ENCODE measurements at regions of chr3 and their contacts with region 1.

Region 1: GRCh38 chr3:43162230-43163084 is 56.6 kb upstream of the POMGNT2 start:
- DNase-seq: peak; percentile 57
- ATAC-seq: peak; percentile 84
- H3K4me3 Mint-ChIP-seq: peak overlapping the region; percentile 61
- H3K27ac Mint-ChIP-seq: peak overlapping the region; percentile 87
- H3K4me1 Mint-ChIP-seq: peaks cover 20% of the 10 kb centered on the region
- H3K27me3 Mint-ChIP-seq: no peaks in the 10 kb centered on the region

Region 2: GRCh38 chr3:42451546-42452230 is 710.8 kb before region 1 on chr3:
- CTCF ChIA-PET with region 1: no interaction called
- POLR2A ChIA-PET with region 1: no interaction called
- intact Hi-C with region 1: no loop called
- DNase-seq: no peak
- ATAC-seq: no peak
- H3K4me3 Mint-ChIP-seq: no peak overlapping the region
- H3K27ac Mint-ChIP-seq: no peak overlapping the region
- H3K4me1 Mint-ChIP-seq: no peaks in the 10 kb centered on the region
- H3K27me3 Mint-ChIP-seq: no peaks in the 10 kb centered on the region

Region 3: GRCh38 chr3:42961633-42962032 is 200.8 kb before region 1 on chr3:
- CTCF ChIA-PET with region 1: interaction called, 8 read pairs
- POLR2A ChIA-PET with region 1: no interaction called
- intact Hi-C with region 1: loop called in 1 of 2 experiments (anchors 2 kb)
- DNase-seq: peak; percentile 31
- ATAC-seq: no peak
- H3K4me3 Mint-ChIP-seq: no peak overlapping the region
- H3K27ac Mint-ChIP-seq: no peak overlapping the region
- H3K4me1 Mint-ChIP-seq: peaks cover 22% of the 10 kb centered on the region
- H3K27me3 Mint-ChIP-seq: no peaks in the 10 kb centered on the region

Region 4: DNA sequence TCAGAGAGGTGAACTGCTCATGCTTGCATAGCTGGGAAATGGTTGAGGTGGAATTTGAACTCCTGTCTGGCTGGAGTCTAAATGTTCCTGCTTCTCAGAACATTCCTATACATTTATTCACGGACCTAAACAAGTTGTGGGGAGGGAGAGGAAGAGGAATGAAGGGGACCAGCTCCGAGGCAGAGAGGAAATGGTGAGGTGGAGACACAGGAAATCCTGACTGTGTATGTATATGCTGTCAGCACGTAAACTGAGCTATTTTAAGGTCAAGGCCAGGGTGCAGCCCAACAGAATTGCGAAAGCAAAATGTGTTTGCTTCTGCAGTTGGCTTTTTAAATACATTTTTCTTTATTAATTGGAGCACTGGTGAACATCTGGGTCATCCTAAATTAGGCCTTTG is 17.6 kb after region 1 on chr3:
- CTCF ChIA-PET with region 1: interaction called, 14 read pairs
- POLR2A ChIA-PET with region 1: no interaction called
- intact Hi-C with region 1: no loop called
- DNase-seq: peak; percentile 52
- ATAC-seq: peak; percentile 76
- H3K4me3 Mint-ChIP-seq: peak overlapping the region; percentile 17
- H3K27ac Mint-ChIP-seq: peak overlapping the region; percentile 66
- H3K4me1 Mint-ChIP-seq: peaks cover 53% of the 10 kb centered on the region
- H3K27me3 Mint-ChIP-seq: no peaks in the 10 kb centered on the region